CD8-positive, alpha-beta T cell (primary cell): ENCODE measurements at regions of chr3 and their contacts with region 1.

Region 1: GRCh38 chr3:152258448-152259393 is 10.0 kb upstream of the MBNL1 start:
- DNase-seq: peak in 8 of 9 experiments; percentile 32 to 84 (median 67)
- ATAC-seq: peak; percentile 52
- H3K4me3 ChIP-seq: peak overlapping the region in 1 of 2 experiments; percentile 22
- H3K4me3 Mint-ChIP-seq: peak overlapping the region; percentile 72
- H3K27ac ChIP-seq: peak overlapping the region; percentile 49 to 78
- H3K27ac Mint-ChIP-seq: peak overlapping the region; percentile 98
- H3K4me1 ChIP-seq: peaks cover 80% of the 10 kb centered on the region
- H3K4me1 Mint-ChIP-seq: peaks cover 86% of the 10 kb centered on the region
- H3K27me3 ChIP-seq: no peaks in the 10 kb centered on the region
- H3K27me3 Mint-ChIP-seq: no peaks in the 10 kb centered on the region
- CTCF ChIP-seq: no peak

Region 2: DNA sequence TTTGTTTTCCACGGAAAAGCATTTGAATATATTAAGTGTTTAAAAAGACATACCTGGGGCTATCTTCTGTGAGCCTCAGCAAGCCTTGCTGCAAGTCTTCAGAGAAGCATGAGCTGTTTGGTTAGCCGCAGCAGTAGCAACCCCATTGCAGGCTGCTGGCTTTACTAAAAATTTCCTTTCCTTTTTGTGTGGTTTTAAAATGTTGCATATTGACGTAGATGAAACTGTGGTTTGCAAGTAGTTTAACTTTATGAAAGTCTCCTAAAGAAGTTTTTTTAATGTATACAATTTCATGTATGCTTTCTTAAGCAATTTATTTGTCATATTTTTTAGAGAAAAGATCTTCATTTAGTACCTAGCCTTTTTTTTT is 1055.7 kb before region 1 on chr3 and contains the start of gene GPR171:
- CTCF ChIA-PET with region 1: no interaction called
- POLR2A ChIA-PET with region 1: no interaction called
- intact Hi-C with region 1: loop called in 1 of 2 experiments (anchors 10 kb)
- DNase-seq: peak; percentile 46 to 91 (median 68)
- ATAC-seq: peak; percentile 84
- H3K4me3 ChIP-seq: peak within 1 kb of the TSS; percentile 50 to 59
- H3K4me3 Mint-ChIP-seq: peak within 1 kb of the TSS; percentile 76
- H3K27ac ChIP-seq: peak within 1 kb of the TSS; percentile 36 to 72
- H3K27ac Mint-ChIP-seq: peak within 1 kb of the TSS; percentile 91
- H3K4me1 ChIP-seq: peaks cover 67% of the 10 kb centered on the region
- H3K4me1 Mint-ChIP-seq: peaks cover 81% of the 10 kb centered on the region
- H3K27me3 ChIP-seq: no peaks in the 10 kb centered on the region
- H3K27me3 Mint-ChIP-seq: no peaks in the 10 kb centered on the region
- CTCF ChIP-seq: no peak
- total RNA-seq, gene GPR171: 11.5 to 13.4 TPM

Region 3: DNA sequence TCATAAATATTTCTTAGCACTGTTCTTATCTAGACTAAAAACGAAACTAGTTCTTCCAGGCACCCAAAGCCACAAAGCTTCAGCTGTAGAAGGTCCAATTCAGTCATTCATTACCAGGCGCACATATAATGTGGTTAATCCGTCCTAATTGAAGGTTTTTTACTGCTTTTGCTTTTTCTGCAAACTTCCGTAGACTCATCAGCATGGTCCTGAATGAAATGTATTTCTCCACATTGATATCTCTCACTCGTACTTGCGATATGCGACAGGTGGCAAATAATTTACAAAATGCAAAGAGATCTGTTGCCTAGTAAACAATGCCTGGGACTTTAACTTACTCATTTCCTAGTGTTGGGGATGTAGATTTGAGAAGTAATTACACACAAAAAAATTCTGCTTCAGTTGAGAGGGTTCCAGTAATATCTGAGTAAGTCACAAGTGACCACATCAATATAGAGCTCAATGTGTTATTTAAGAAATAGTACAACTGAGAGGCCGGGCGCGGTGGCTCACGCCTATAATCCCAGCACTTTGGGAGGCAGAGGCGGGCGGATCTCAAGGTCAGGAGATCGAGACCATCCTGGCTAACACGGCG is 65.0 kb before region 1 on chr3:
- CTCF ChIA-PET with region 1: no interaction called
- POLR2A ChIA-PET with region 1: interaction called, 11 read pairs
- intact Hi-C with region 1: no loop called
- DNase-seq: peak in 4 of 9 experiments; percentile 20 to 82 (median 51)
- ATAC-seq: peak; percentile 65
- H3K4me3 ChIP-seq: peak overlapping the region; percentile 54 to 59
- H3K4me3 Mint-ChIP-seq: peak overlapping the region; percentile 83
- H3K27ac ChIP-seq: peak overlapping the region; percentile 62 to 80
- H3K27ac Mint-ChIP-seq: peak overlapping the region; percentile 90
- H3K4me1 ChIP-seq: peaks cover 65% of the 10 kb centered on the region
- H3K4me1 Mint-ChIP-seq: peaks cover 76% of the 10 kb centered on the region
- H3K27me3 ChIP-seq: no peaks in the 10 kb centered on the region
- H3K27me3 Mint-ChIP-seq: no peaks in the 10 kb centered on the region
- CTCF ChIP-seq: no peak

Region 4: DNA sequence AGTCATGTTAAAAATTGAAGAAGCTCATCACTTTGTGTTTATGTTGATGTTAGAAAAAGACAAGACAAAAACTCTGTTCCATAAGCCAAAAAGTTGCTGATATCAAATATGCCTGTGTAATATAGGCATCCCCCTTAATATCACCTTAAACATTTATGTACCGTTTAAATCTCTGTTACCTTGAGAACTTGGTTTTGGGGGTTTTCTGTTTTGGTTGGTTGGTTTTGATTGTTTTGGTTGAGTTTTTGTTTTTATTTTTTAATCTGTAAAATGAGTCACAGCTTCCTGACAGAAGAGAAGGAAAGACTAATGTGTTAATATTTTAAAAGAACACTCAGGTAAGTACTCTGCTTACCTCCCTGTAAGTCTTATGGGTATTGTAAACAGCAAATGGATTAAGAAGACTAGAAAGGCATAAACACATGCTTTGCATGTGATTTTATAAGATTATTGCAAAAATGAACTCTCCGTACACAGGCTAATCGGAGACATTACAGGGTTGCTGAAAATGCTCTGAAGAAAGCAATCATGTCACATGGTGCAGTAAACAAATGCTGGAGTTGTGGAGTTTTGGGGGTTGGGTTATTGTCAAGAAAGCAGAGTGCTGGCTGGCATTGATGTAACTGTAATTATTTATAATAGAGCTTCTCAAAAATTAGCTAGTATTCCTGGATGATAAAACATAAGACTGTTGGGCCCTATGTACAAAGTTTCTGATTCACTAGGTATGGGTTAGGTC is 59.5 kb before region 1 on chr3:
- CTCF ChIA-PET with region 1: interaction called, 3 read pairs
- POLR2A ChIA-PET with region 1: interaction called, 11 read pairs
- intact Hi-C with region 1: loop called in 1 of 2 experiments (anchors 2 kb)
- DNase-seq: peak in 2 of 9 experiments; percentile 49 to 69
- ATAC-seq: peak; percentile 43
- H3K4me3 ChIP-seq: peak overlapping the region; percentile 12 to 26
- H3K4me3 Mint-ChIP-seq: peak overlapping the region; percentile 79
- H3K27ac ChIP-seq: peak overlapping the region; percentile 52 to 78
- H3K27ac Mint-ChIP-seq: peak overlapping the region; percentile 93
- H3K4me1 ChIP-seq: peaks cover 61% of the 10 kb centered on the region
- H3K4me1 Mint-ChIP-seq: peaks cover 75% of the 10 kb centered on the region
- H3K27me3 ChIP-seq: no peaks in the 10 kb centered on the region
- H3K27me3 Mint-ChIP-seq: no peaks in the 10 kb centered on the region
- CTCF ChIP-seq: no peak